ENCODE measurements at regions of chr1 and their contacts with region 1.

Region 1: GRCh38 chr1:36223993-36224536 is at the start of gene THRAP3:
- DNase-seq: peak; percentile 98
- ATAC-seq: peak; percentile 89
- H3K4me3 Mint-ChIP-seq: peak within 1 kb of the TSS; percentile 99
- H3K27ac Mint-ChIP-seq: peak within 1 kb of the TSS; percentile 100
- H3K4me1 Mint-ChIP-seq: peaks cover 36% of the 10 kb centered on the region
- H3K27me3 Mint-ChIP-seq: no peaks in the 10 kb centered on the region
- CTCF ChIP-seq: no peak
- total RNA-seq, gene THRAP3: 142 and 145 TPM in 2 replicates

Region 2: GRCh38 chr1:35557292-35558063 is 666.6 kb before region 1 on chr1 and contains the starts of genes KIAA0319L and NCDN:
- CTCF ChIA-PET with region 1: no interaction called
- POLR2A ChIA-PET with region 1: no interaction called
- intact Hi-C with region 1: loop called (anchors 5 kb)
- DNase-seq: peak; percentile 87
- ATAC-seq: peak; percentile 94
- H3K4me3 Mint-ChIP-seq: peak within 1 kb of the TSS; percentile 96
- H3K27ac Mint-ChIP-seq: peak within 1 kb of the TSS; percentile 96
- H3K4me1 Mint-ChIP-seq: peaks cover 32% of the 10 kb centered on the region
- H3K27me3 Mint-ChIP-seq: no peaks in the 10 kb centered on the region
- CTCF ChIP-seq: no peak
- total RNA-seq, gene KIAA0319L: 43.3 and 59.1 TPM in 2 replicates
- total RNA-seq, gene NCDN: 15.2 and 18.4 TPM in 2 replicates

Region 3: GRCh38 chr1:36155408-36156328 is 68.4 kb before region 1 on chr1 and contains the start of gene MAP7D1:
- CTCF ChIA-PET with region 1: interaction called, 4 read pairs
- POLR2A ChIA-PET with region 1: interaction called, 62 read pairs
- intact Hi-C with region 1: no loop called
- DNase-seq: peak; percentile 88
- ATAC-seq: peak; percentile 76
- H3K4me3 Mint-ChIP-seq: peak within 1 kb of the TSS; percentile 89
- H3K27ac Mint-ChIP-seq: peak within 1 kb of the TSS; percentile 90
- H3K4me1 Mint-ChIP-seq: peaks cover 65% of the 10 kb centered on the region
- H3K27me3 Mint-ChIP-seq: no peaks in the 10 kb centered on the region
- CTCF ChIP-seq: no peak
- total RNA-seq, gene MAP7D1: 56.5 and 59.9 TPM in 2 replicates

Region 4: DNA sequence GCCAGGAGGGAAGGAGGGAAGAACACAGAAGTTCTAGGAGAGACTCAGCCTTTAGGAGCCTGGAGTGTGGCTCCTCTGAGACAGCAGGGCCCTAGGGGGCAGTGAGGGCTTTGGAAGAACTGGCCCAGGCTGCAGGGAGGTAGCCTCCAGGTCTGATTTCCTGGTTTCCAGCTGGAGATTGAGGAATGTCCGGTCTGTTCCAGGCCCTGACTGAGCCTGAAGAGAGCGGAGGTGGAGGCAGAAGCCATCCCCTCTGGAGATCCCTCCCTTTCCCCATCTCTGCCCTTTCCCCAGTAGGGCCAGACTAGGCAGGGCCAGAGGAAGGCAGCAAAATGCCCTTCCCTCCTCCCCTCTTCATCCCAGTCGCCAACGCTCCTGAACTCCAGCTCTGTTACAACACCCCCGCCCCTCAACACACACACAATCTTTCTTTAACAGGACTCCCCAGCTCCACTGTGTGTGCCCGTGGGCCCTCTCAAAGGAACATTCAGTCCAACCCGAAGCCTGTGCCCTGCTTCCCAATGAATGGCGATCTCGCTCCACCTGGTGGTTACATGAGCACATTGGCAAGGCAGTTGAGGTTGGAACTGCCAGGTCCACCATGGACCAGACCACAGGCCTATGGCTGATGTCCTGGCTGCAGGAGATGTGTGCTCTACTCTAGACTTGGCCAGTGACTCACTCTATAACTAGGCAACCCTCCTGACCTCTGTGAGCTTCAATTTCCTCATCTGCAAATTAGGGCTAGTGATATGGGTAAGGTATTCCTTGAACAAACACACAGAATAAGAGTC is 36.1 kb before region 1 on chr1:
- CTCF ChIA-PET with region 1: interaction called, 13 read pairs
- POLR2A ChIA-PET with region 1: interaction called, 5 read pairs
- intact Hi-C with region 1: loop called (anchors 1 kb)
- DNase-seq: peak; percentile 58
- ATAC-seq: peak; percentile 99
- H3K4me3 Mint-ChIP-seq: no peak overlapping the region
- H3K27ac Mint-ChIP-seq: no peak overlapping the region
- H3K4me1 Mint-ChIP-seq: peaks cover 3% of the 10 kb centered on the region
- H3K27me3 Mint-ChIP-seq: no peaks in the 10 kb centered on the region
- CTCF ChIP-seq: no peak

Region 5: GRCh38 chr1:36274201-36274600 is 50.1 kb after region 1 on chr1:
- CTCF ChIA-PET with region 1: no interaction called
- POLR2A ChIA-PET with region 1: no interaction called
- intact Hi-C with region 1: no loop called
- DNase-seq: no peak
- ATAC-seq: no peak
- H3K4me3 Mint-ChIP-seq: no peak overlapping the region
- H3K27ac Mint-ChIP-seq: no peak overlapping the region
- H3K4me1 Mint-ChIP-seq: peaks cover 15% of the 10 kb centered on the region
- H3K27me3 Mint-ChIP-seq: no peaks in the 10 kb centered on the region
- CTCF ChIP-seq: no peak

Region 6: DNA sequence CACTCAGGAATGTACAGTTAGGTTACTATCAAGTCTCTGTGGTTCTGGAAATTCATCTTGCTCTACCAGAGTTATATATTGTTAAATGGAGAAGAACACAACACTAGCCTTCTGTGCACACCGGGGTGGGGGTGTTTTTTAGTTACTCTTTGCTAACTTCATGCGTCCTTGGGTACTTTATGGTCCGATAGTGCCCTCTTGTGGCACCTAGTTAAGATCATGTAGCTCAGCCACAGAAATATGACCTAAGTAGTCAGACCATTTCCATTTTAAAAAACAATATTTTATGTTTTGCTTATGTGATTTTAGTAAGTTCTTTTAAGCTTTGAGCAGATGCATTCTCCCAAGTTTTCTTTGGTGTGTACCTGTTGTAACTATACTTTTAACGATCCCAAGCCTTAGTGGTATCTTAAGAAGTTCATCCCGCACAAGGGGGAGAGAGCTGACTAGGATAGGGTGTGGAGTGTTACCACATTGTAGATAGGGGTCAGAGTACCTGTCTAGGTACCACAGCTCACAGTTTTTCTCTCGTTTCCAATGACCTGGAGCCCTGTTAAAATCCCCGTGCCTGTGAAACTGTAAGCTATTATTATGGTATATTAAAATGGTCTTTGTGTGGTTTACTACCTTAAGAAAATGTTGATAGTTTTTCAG is 61.5 kb after region 1 on chr1:
- CTCF ChIA-PET with region 1: interaction called, 9 read pairs
- POLR2A ChIA-PET with region 1: interaction called, 8 read pairs
- intact Hi-C with region 1: loop called (anchors 1 kb)
- DNase-seq: no peak
- ATAC-seq: peak; percentile 92
- H3K4me3 Mint-ChIP-seq: no peak overlapping the region
- H3K27ac Mint-ChIP-seq: peak overlapping the region; percentile 59
- H3K4me1 Mint-ChIP-seq: peaks cover 11% of the 10 kb centered on the region
- H3K27me3 Mint-ChIP-seq: no peaks in the 10 kb centered on the region
- CTCF ChIP-seq: no peak

Region 7: GRCh38 chr1:36463803-36464604 is 239.9 kb after region 1 on chr1 and contains the start of gene MRPS15:
- CTCF ChIA-PET with region 1: no interaction called
- POLR2A ChIA-PET with region 1: interaction called, 10 read pairs
- intact Hi-C with region 1: no loop called
- DNase-seq: peak; percentile 90
- ATAC-seq: peak; percentile 95
- H3K4me3 Mint-ChIP-seq: peak within 1 kb of the TSS; percentile 96
- H3K27ac Mint-ChIP-seq: peak within 1 kb of the TSS; percentile 98
- H3K4me1 Mint-ChIP-seq: peaks cover 27% of the 10 kb centered on the region
- H3K27me3 Mint-ChIP-seq: no peaks in the 10 kb centered on the region
- CTCF ChIP-seq: no peak
- total RNA-seq, gene MRPS15: 63.5 and 67.0 TPM in 2 replicates

Measured in activated B cell treated with CpG ODN at 0.5 μM for 24 hours (primary cell).